HEK293 (cell line): ENCODE measurements at regions of chr3 and their contacts with region 1.

Region 1: DNA sequence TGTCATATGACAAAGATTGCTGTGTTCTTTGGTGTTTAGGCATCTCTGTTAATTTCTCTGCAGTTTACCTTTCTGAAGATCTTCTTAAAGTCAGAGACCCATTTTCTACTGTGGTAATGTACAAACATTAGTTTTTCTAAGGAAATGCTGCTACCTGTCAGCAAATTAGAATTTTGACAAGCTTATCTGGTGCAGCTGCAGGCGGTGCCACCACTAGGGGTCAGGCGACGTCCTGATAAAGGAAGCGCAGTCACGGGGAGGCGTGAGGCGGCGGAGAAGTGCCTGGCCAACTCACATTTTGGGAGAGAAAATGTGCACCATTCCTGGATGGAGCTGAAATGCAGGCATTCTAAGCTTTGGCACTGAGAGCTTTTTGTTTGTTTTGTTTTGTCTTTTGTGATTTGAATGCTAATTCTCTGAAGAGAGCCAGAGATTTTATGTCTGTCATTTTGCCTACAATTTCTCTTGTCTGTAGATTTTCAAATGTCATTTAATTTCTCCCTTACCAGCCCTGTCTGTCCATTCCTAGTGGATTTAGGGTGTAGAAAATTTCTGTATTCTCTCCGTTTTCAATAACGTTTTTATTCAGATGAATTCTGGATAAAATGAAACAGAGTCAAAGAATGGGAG is 24.9 kb upstream of the SIAH2 start:
- H3K4me3 ChIP-seq: no peak overlapping the region
- H3K27ac ChIP-seq: no peak overlapping the region
- H3K4me1 ChIP-seq: no peaks in the 10 kb centered on the region
- CTCF ChIP-seq: peak; percentile 64

Region 2: GRCh38 chr3:150546226-150547044 is 241.4 kb before region 1 on chr3 and contains the starts of genes EIF2A and SERP1:
- CTCF ChIA-PET with region 1: no interaction called
- POLR2A ChIA-PET with region 1: no interaction called
- H3K4me3 ChIP-seq: peak within 1 kb of the TSS; percentile 99
- H3K27ac ChIP-seq: peak within 1 kb of the TSS; percentile 87
- H3K4me1 ChIP-seq: peaks cover 14% of the 10 kb centered on the region; the same call in 1 of the 2 replicates
- CTCF ChIP-seq: peak; percentile 4; the same call in 1 of the 2 replicates

Region 3: DNA sequence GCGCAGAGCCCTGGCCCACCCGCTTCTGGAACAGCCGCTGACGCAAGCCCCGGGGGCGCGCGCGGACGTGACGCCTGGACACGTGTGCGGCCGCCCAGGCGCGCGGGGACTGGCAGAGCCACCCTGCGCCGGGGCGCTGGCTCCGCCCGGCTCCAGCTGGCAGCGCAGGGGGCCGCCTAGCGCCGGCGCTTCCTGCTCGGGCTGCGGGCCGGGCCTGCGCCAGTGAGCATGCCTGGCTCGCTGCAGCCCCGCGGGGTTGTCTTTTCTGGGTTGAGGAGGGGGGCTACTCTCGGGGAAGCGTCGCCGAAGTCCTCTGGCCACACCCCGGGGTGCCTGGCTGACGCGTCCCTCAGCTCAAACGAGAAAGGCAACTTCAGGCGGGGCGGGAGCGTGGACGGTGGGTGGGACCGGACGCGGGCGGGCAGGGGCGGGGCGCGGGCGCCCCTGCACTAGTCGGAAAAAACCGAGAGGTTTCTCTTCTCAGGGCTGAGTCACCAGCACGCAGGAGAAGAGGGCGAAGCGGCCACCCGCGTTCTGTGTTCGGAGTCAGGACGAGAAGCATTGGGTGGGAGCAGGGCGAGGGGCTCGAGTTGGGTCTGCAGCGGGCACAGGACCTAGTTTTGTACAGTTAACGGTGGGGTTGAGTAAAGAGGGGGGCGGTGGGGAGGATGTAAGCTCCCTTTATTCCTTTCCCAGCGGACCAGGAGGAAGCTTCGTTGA is 24.6 kb before region 1 on chr3 and contains the start of gene SIAH2:
- CTCF ChIA-PET with region 1: interaction called, 18 read pairs
- POLR2A ChIA-PET with region 1: no interaction called
- H3K4me3 ChIP-seq: peak within 1 kb of the TSS; percentile 70
- H3K27ac ChIP-seq: peak within 1 kb of the TSS; percentile 88
- H3K4me1 ChIP-seq: no peaks in the 10 kb centered on the region; the same call in 1 of the 2 replicates
- CTCF ChIP-seq: no peak

Region 4: GRCh38 chr3:150861851-150862250 is 74.0 kb after region 1 on chr3:
- CTCF ChIA-PET with region 1: interaction called, 33 read pairs
- POLR2A ChIA-PET with region 1: no interaction called
- H3K4me3 ChIP-seq: no peak overlapping the region
- H3K27ac ChIP-seq: no peak overlapping the region
- H3K4me1 ChIP-seq: no peaks in the 10 kb centered on the region
- CTCF ChIP-seq: no peak